ENCODE measurements at regions of chr9 and their contacts with region 1.

Region 1: GRCh38 chr9:82645600-82645999 is 417.3 kb downstream of the RASEF start:
- DNase-seq: no peak
- H3K4me3 ChIP-seq: no peak overlapping the region
- H3K27ac ChIP-seq: no peak overlapping the region
- H3K4me1 ChIP-seq: no peaks in the 10 kb centered on the region
- H3K27me3 ChIP-seq: no peaks in the 10 kb centered on the region
- CTCF ChIP-seq: no peak
- POLR2A ChIP-seq: no peak

Region 2: DNA sequence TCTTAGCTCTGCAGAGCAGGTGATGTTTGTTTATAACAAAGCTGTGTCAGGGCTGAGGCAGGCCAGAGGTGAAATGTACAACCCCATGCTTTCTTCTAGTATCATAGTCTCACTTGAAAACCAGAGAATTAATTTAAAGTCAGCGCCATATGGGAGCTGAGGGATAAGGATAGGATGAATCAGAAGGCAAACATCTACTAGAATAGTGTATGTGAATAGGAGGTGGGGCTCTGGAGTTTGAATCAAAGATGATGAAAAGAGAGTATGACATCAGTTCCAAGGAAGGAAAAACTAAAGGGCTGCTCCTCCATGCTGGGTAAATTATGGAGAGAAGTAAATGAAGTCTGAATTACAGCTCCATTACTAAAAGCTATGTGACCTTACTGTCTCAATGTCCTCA is 24.2 kb before region 1 on chr9:
- intact Hi-C with region 1: loop called (anchors 1 kb)
- DNase-seq: no peak
- H3K4me3 ChIP-seq: no peak overlapping the region
- H3K27ac ChIP-seq: no peak overlapping the region
- H3K4me1 ChIP-seq: no peaks in the 10 kb centered on the region
- H3K27me3 ChIP-seq: no peaks in the 10 kb centered on the region
- CTCF ChIP-seq: no peak
- POLR2A ChIP-seq: no peak

Region 3: DNA sequence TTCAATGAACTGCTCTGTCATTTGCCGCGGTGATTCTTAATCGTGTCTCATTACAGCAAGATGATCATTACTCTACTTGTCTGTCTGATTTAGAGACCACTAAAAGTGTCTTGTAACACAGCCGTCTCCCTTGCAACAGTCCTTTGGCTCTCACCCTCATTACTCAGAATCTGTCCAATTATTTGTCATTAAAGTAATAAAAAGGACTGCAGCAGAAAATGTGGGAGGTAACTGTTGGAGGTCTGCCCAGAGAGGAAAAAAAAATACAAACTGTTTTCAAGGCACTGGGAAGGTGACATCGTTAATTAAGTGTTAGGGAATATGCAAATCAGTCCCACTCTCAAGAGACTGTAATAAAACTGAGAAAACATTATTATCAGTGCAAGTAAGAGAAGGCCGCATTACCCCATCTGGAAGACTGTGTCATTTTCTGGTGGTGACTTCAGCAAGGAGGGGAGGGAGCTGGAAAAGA is 136.4 kb after region 1 on chr9:
- intact Hi-C with region 1: no loop called
- DNase-seq: no peak
- H3K4me3 ChIP-seq: no peak overlapping the region
- H3K27ac ChIP-seq: no peak overlapping the region
- H3K4me1 ChIP-seq: peaks cover 4% of the 10 kb centered on the region
- H3K27me3 ChIP-seq: no peaks in the 10 kb centered on the region
- CTCF ChIP-seq: no peak
- POLR2A ChIP-seq: no peak

Region 4: GRCh38 chr9:83182071-83182470 is 536.5 kb after region 1 on chr9:
- intact Hi-C with region 1: no loop called
- DNase-seq: no peak
- H3K4me3 ChIP-seq: no peak overlapping the region
- H3K27ac ChIP-seq: no peak overlapping the region
- H3K4me1 ChIP-seq: no peaks in the 10 kb centered on the region
- H3K27me3 ChIP-seq: no peaks in the 10 kb centered on the region
- CTCF ChIP-seq: no peak
- POLR2A ChIP-seq: no peak

Region 5: GRCh38 chr9:84419031-84419602 is 1773.5 kb after region 1 on chr9:
- intact Hi-C with region 1: no loop called
- DNase-seq: no peak
- H3K4me3 ChIP-seq: no peak overlapping the region
- H3K27ac ChIP-seq: no peak overlapping the region
- H3K4me1 ChIP-seq: no peaks in the 10 kb centered on the region
- H3K27me3 ChIP-seq: no peaks in the 10 kb centered on the region
- CTCF ChIP-seq: no peak
- POLR2A ChIP-seq: no peak

Measured in vagina (tissue), 2 donors.